ENCODE measurements at regions of chr1 and their contacts with region 1.

Region 1: GRCh38 chr1:151547119-151547899 is 7.2 kb downstream of the TUFT1 start:
- DNase-seq: peak; percentile 99
- ATAC-seq: peak; percentile 72
- H3K4me3 ChIP-seq: peak overlapping the region; percentile 21
- H3K27ac ChIP-seq: peak overlapping the region; percentile 89
- H3K4me1 ChIP-seq: peaks cover 60% of the 10 kb centered on the region
- H3K27me3 ChIP-seq: no peaks in the 10 kb centered on the region
- CTCF ChIP-seq: no peak

Region 2: DNA sequence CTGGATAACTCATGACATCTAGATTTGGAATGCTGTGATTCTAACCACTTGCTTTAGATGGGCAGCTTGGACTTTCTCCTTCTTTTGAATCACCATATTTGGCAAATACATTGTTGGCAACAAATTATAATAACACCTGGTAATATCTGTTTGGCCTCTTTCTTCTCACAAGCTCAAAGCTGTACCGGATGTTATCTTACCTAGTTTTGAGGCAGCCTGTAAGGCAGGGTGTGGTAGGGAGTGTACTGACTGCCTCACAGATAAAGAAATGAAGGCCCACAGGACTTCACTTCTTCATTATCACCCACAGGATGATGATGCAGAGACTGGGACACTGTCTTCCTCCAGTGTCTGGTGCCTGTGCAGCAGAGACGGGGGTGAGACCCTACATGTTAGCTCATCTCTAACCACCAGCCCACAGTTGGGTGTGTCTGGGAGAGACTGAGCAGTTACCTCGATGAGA is 21.3 kb after region 1 on chr1:
- CTCF ChIA-PET with region 1: no interaction called
- POLR2A ChIA-PET with region 1: no interaction called
- intact Hi-C with region 1: loop called (anchors 2 kb)
- DNase-seq: peak; percentile 92
- ATAC-seq: peak; percentile 70
- H3K4me3 ChIP-seq: no peak overlapping the region
- H3K27ac ChIP-seq: peak overlapping the region; percentile 64
- H3K4me1 ChIP-seq: peaks cover 55% of the 10 kb centered on the region
- H3K27me3 ChIP-seq: no peaks in the 10 kb centered on the region
- CTCF ChIP-seq: no peak

Region 3: GRCh38 chr1:151585622-151586021 is 38.3 kb after region 1 on chr1:
- CTCF ChIA-PET with region 1: interaction called, 3 read pairs
- POLR2A ChIA-PET with region 1: interaction called, 3 read pairs
- intact Hi-C with region 1: loop called (anchors 5 kb)
- DNase-seq: peak; percentile 94
- ATAC-seq: peak; percentile 99
- H3K4me3 ChIP-seq: no peak overlapping the region
- H3K27ac ChIP-seq: peak overlapping the region; percentile 23
- H3K4me1 ChIP-seq: peaks cover 19% of the 10 kb centered on the region
- H3K27me3 ChIP-seq: no peaks in the 10 kb centered on the region
- CTCF ChIP-seq: no peak

Region 4: DNA sequence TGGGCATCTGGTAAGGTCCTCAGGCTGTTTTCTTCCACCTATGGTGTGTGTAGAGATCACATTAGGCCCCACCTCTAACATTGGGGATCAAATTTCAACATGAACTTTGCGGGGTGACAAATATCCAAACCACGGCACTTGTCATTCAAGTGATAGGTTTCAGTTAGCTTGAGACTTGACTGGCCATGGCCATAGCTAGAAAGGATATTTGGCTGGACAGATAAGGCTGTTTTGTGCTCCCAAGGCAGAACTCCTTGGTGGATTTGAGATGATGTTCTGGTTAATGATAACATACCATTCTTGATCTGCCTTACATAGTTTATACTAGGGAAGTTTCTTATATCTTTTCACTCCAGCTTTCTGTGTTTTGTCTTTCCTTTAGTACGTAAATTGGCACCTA is 120.8 kb after region 1 on chr1:
- CTCF ChIA-PET with region 1: no interaction called
- POLR2A ChIA-PET with region 1: no interaction called
- intact Hi-C with region 1: no loop called
- DNase-seq: no peak
- ATAC-seq: no peak
- H3K4me3 ChIP-seq: no peak overlapping the region
- H3K27ac ChIP-seq: no peak overlapping the region
- H3K4me1 ChIP-seq: no peaks in the 10 kb centered on the region
- H3K27me3 ChIP-seq: no peaks in the 10 kb centered on the region
- CTCF ChIP-seq: no peak